ENCODE measurements at regions of chr15 and their contacts with region 1.

Region 1: GRCh38 chr15:67240235-67241131 is 14.0 kb downstream of the AAGAB start:
- DNase-seq: peak; percentile 8
- ATAC-seq: peak; percentile 62
- H3K4me3 ChIP-seq: peak overlapping the region; percentile 50; the same call in 1 of the 2 replicates
- H3K27ac ChIP-seq: peak overlapping the region; percentile 59
- H3K4me1 ChIP-seq: peaks cover 30% of the 10 kb centered on the region
- H3K27me3 ChIP-seq: no peaks in the 10 kb centered on the region
- CTCF ChIP-seq: peak; percentile 25 to 46 (median 38); a peak in 5 of 6 replicates
- EP300 ChIP-seq: no peak
- POLR2A ChIP-seq: no peak
- RAD21 ChIP-seq: peak; percentile 45

Region 2: GRCh38 chr15:67065444-67066093 is 174.9 kb before region 1 on chr15 and contains the start of gene SMAD3:
- CTCF ChIA-PET with region 1: interaction called, 5 read pairs
- POLR2A ChIA-PET with region 1: no interaction called
- RAD21 ChIA-PET with region 1: interaction called, 4 read pairs
- SMC1A ChIA-PET with region 1: interaction called, 7 read pairs
- in situ Hi-C with region 1: no loop called
- intact Hi-C with region 1: loop called (anchors 5 kb)
- DNase-seq: no peak
- ATAC-seq: peak; percentile 72
- H3K4me3 ChIP-seq: peak within 1 kb of the TSS; percentile 80
- H3K27ac ChIP-seq: peak within 1 kb of the TSS; percentile 78
- H3K4me1 ChIP-seq: peaks cover 25% of the 10 kb centered on the region
- H3K27me3 ChIP-seq: no peaks in the 10 kb centered on the region
- CTCF ChIP-seq: no peak
- EP300 ChIP-seq: no peak
- POLR2A ChIP-seq: peak; percentile 93
- RAD21 ChIP-seq: no peak
- polyA plus RNA-seq, gene SMAD3: 5.6 to 6.6 TPM

Region 3: GRCh38 chr15:67101911-67102598 is 138.4 kb before region 1 on chr15:
- CTCF ChIA-PET with region 1: interaction called, 11 read pairs
- POLR2A ChIA-PET with region 1: interaction called, 7 read pairs
- RAD21 ChIA-PET with region 1: interaction called, 12 read pairs
- SMC1A ChIA-PET with region 1: interaction called, 5 read pairs
- in situ Hi-C with region 1: no loop called
- intact Hi-C with region 1: loop called (anchors 5 kb)
- DNase-seq: peak; percentile 97
- ATAC-seq: peak; percentile 70
- H3K4me3 ChIP-seq: peak overlapping the region; percentile 0; the same call in 1 of the 2 replicates
- H3K27ac ChIP-seq: peak overlapping the region; percentile 98
- H3K4me1 ChIP-seq: peaks cover 76% of the 10 kb centered on the region
- H3K27me3 ChIP-seq: no peaks in the 10 kb centered on the region
- CTCF ChIP-seq: no peak
- EP300 ChIP-seq: peak; percentile 99 to 100
- POLR2A ChIP-seq: no peak
- RAD21 ChIP-seq: peak; percentile 30

Region 4: DNA sequence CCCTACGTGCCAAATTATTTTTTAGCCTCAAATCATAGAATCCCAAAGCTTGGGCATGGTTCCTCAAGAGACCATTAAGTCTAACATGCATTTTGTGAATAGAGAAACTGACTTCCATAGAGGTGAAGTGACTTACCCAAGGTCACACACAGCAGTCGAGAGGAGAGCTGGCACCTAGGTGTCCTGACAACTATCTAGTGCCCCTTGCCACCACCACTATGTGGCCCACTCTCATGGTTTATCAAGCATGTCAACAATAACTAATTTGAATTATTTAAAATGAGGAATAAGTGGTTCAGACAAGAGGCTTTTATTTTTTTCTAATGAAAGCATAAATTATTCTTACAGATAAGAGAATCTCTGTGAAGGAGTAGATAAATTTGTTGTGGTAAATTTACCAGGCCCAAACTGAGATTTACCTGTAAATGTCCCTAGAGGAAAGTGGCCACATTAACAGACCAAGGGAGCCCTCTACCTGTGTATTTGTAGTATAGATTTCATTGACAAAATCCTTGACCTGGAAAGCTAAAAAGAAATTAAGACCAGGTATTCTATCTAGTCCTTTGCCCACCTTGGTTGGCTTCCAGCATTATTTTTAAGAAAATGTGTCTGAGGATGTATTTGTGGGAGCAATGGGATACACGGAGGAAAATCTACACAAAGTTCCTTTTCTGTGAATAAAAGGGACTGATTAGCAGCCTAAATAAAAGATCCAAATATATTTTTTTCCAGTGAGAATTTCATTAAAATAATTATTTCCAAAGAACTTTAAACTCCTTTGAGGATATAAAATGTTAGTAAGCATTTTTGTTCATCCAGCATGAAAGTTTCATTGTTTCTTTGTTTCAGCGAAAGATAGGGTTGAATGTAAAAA is 63.2 kb after region 1 on chr15:
- CTCF ChIA-PET with region 1: interaction called, 69 read pairs
- POLR2A ChIA-PET with region 1: no interaction called
- RAD21 ChIA-PET with region 1: interaction called, 18 read pairs
- SMC1A ChIA-PET with region 1: interaction called, 28 read pairs
- in situ Hi-C with region 1: no loop called
- intact Hi-C with region 1: loop called (anchors 2 kb)
- DNase-seq: peak; percentile 24
- ATAC-seq: peak; percentile 70
- H3K4me3 ChIP-seq: no peak overlapping the region
- H3K27ac ChIP-seq: no peak overlapping the region
- H3K4me1 ChIP-seq: no peaks in the 10 kb centered on the region
- H3K27me3 ChIP-seq: no peaks in the 10 kb centered on the region
- CTCF ChIP-seq: peak; percentile 38 to 68 (median 46); a peak in 5 of 6 replicates
- EP300 ChIP-seq: no peak
- POLR2A ChIP-seq: no peak
- RAD21 ChIP-seq: peak; percentile 94

Measured in GM12878 (cell line).